ENCODE measurements at regions of chr7 and their contacts with region 1.

Region 1: GRCh38 chr7:992709-993607 is 10.0 kb downstream of the CYP2W1 start:
- DNase-seq: peak; percentile 94
- CTCF ChIP-seq: peak; percentile 100

Region 2: DNA sequence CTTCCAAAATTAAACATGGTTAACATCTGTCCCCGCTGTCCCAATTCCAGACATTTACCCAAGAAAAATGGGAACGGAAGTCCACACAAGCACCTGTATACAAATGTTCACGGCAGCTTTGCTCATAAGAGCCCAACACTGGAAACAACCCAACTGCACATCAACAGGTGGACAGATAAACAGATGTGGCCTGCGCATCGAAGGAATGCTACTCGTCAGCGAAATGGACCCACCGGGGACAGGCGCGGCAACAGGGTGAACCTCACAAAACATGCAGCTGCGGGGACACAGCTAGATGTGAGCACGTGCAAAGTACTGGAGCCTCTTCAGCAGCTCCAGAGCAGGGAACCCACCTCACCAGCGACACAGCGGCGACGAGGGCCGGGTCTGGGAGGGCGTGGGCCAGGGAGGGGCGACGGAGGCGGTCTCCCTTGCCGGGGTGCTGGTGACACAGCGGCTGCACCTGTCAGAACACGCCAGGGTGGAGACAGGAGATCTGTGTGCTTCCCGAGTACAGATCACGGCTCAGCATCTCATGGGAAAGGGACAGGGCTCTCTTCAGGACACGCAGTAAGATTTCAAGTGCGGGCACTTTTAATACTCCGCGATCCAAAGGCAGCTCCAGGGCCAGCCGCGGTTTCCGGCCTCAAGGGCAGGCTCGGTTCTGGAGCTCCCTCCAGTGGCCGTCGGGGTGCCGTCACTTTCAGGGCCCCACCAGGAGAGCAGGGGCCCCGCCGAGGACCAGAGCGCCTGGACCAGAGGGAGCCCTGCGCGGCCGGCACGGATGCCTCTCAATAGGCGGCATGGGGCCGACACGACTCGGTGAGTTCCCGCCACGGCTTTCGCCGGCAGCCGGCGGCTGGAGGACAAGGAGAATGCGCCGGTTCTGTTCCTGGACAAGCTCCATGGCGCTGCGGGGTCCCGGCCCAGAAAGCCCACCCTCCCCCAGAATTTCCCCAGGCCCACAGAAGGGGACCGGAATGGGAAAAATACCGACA is 72.6 kb after region 1 on chr7:
- in situ Hi-C with region 1: loop called (anchors 10 kb)
- DNase-seq: peak; percentile 96
- CTCF ChIP-seq: peak; percentile 95

Region 3: GRCh38 chr7:1159891-1160668 is 167.1 kb after region 1 on chr7 and contains the start of gene ZFAND2A:
- in situ Hi-C with region 1: loop called (anchors 10 kb)
- DNase-seq: peak; percentile 100
- CTCF ChIP-seq: no peak

Region 4: DNA sequence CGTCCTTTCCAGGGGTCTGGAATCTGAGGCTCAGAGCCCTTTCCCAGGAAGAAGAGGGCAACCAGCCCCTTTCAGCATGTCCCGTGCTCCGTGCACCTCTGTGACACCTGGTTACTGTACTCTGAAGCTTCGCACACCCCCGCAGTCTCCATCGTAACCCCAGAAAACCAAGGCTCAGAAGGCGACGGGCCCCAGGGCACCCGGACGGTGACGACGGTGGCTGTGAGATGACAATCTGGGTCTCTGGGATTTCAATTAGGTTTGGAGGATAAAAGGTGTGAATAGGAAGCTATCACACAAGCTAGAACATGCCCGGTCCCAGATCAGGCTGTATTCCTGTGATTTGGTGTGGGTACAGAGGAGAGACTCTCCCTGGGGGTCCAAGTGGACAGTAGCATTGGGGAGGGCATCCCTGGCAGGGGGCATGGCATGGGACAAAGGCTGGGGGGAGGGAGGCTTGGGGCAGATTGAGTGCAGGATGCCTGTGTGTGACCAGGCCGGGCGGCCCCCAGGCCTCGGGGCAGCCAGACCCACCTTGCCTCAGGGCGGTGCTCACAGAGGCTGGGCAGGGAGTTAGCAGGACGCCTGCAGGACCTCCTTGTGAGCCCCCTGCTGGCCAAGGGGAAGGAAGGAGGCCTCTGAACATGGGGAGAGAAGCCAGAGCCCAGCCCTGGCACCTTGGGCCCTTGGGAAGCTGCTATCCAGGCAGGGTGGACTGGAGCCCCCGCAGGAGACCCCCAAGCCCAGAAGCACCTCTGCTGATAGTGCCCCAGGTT is 600.3 kb after region 1 on chr7:
- in situ Hi-C with region 1: no loop called
- DNase-seq: no peak
- CTCF ChIP-seq: peak; percentile 42